Endothelial cell of umbilical vein (primary cell): ENCODE measurements at regions of chr17 and their contacts with region 1.

Region 1: DNA sequence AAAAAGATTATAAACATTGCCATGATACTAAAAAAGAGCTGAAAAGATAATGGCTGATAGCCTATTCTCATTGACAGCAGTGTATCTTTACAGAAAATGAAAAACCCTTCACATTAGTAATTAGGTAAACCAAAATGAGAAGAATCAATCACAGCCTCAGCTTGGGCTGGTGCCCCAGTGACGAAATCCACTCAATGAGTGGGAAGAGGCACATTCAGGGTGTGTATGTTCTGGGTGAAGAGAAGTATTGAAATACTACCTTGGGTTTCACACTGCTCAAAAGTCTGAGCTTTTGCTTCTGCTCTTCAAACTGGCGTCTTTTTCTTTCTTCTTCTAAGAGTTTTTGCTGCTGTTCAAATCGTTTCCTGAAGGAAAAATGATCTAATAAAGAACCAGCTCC is 24.2 kb downstream of the SYNRG start:
- DNase-seq: no peak
- H3K4me3 ChIP-seq: no peak overlapping the region
- H3K27ac ChIP-seq: no peak overlapping the region
- H3K4me1 ChIP-seq: no peaks in the 10 kb centered on the region
- H3K27me3 ChIP-seq: no peaks in the 10 kb centered on the region
- CTCF ChIP-seq: no peak
- POLR2A ChIP-seq: no peak

Region 2: GRCh38 chr17:37506678-37507077 is 78.4 kb before region 1 on chr17:
- CTCF ChIA-PET with region 1: no interaction called
- POLR2A ChIA-PET with region 1: no interaction called
- dilution Hi-C with region 1: no loop called
- intact Hi-C with region 1: no loop called
- DNase-seq: peak; percentile 38
- H3K4me3 ChIP-seq: no peak overlapping the region
- H3K27ac ChIP-seq: no peak overlapping the region
- H3K4me1 ChIP-seq: no peaks in the 10 kb centered on the region
- H3K27me3 ChIP-seq: no peaks in the 10 kb centered on the region
- CTCF ChIP-seq: peak; percentile 45 to 46
- POLR2A ChIP-seq: no peak

Region 3: DNA sequence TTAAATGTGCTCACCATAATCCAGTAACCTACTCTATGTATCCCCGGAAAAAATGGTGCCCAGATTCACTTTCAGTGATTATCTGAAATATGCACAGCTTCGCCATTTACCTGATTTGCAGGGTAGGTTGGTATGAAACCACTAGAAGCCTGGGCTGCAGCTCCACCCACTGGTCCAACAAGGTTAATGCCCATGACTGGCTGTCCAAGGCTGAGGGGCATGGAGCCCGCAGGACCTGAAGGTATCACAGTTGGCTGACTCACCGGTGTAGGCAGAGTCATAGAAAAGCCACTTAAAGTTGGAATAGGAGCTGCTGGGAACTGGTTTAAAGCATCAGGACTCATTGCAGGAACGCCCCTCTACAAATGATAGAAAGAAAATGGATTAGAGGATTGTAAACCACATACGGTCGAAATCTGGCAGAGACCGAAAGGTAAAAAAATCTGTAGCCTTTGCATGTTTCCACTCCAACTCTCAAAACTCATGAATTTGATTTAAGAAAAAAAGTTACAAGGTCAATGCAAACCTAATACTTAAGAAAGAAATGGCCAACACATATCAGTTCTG is 14.5 kb before region 1 on chr17:
- CTCF ChIA-PET with region 1: interaction called, 50 read pairs
- POLR2A ChIA-PET with region 1: no interaction called
- dilution Hi-C with region 1: no loop called
- intact Hi-C with region 1: no loop called
- DNase-seq: peak; percentile 66
- H3K4me3 ChIP-seq: no peak overlapping the region
- H3K27ac ChIP-seq: no peak overlapping the region
- H3K4me1 ChIP-seq: no peaks in the 10 kb centered on the region
- H3K27me3 ChIP-seq: no peaks in the 10 kb centered on the region
- CTCF ChIP-seq: peak; percentile 54 to 71
- POLR2A ChIP-seq: no peak